GM10248 (cell line): ENCODE measurements at regions of chr20 and their contacts with region 1.

Region 1: DNA sequence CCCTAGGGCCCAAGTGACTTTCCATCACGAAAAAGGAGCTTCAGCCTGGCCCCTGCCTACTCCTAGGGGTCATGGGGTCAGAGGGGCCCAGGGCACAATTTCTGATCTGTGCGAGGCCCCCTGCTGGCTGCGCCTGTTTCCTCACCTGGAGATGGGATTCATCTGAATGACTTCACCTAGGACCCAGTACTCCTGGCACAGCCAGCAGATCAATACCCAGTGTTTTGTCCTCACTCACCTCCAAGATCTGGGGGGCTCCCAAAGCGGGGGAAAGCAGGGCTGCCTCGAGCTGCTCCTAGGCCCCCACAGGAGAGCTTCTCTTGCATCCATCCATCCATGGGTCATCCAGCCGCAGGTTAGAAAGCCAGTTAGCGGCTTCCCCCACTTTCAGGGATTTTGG is 33.8 kb downstream of the CD40 start:
- DNase-seq: peak; percentile 68
- CTCF ChIP-seq: peak; percentile 20

Region 2: DNA sequence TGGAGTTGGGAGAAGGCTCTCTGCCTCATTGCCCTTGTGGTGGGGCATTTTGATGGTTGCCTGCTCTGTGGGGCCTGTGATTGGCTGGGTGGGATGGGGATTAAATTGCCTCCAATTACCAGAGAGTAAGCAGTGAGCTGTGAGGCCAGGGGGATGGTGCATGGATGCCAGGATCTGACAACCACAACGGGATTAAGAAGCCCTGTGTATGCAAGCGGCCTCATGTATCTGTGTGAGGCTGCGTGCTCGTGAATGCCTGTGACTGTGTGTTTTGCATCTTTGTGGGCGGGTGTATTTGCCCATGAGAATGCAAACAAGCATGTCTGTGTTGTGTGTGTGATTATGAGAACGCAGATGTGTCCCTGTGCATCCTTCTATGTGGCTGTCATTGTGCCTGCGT is 12.3 kb after region 1 on chr20:
- CTCF ChIA-PET with region 1: interaction called, 11 read pairs
- POLR2A ChIA-PET with region 1: interaction called, 4 read pairs
- DNase-seq: no peak
- CTCF ChIP-seq: no peak

Region 3: GRCh38 chr20:46268131-46268614 is 116.2 kb after region 1 on chr20:
- CTCF ChIA-PET with region 1: no interaction called
- POLR2A ChIA-PET with region 1: no interaction called
- DNase-seq: no peak
- CTCF ChIP-seq: no peak